Naive thymus-derived CD4-positive, alpha-beta T cell (primary cell): ENCODE measurements at regions of chr15 and their contacts with region 1.

Region 1: GRCh38 chr15:56786966-56787365 is 53.7 kb upstream of the ZNF280D start:
- DNase-seq: no peak
- ATAC-seq: no peak
- H3K4me3 ChIP-seq: no peak overlapping the region
- H3K4me3 Mint-ChIP-seq: peak overlapping the region in 1 of 10 donors; percentile 55
- H3K27ac ChIP-seq: no peak overlapping the region
- H3K27ac Mint-ChIP-seq: peak overlapping the region in 1 of 9 donors; percentile 76
- H3K4me1 ChIP-seq: no peaks in the 10 kb centered on the region
- H3K4me1 Mint-ChIP-seq: peaks cover 0 to 10% (median 0%) of the 10 kb centered on the region in 7 donors
- H3K27me3 ChIP-seq: no peaks in the 10 kb centered on the region
- H3K27me3 Mint-ChIP-seq: peaks cover 0 to 7% (median 0%) of the 10 kb centered on the region in 5 donors

Region 2: GRCh38 chr15:56582785-56583184 is 204.2 kb before region 1 on chr15:
- CTCF ChIA-PET with region 1: no interaction called
- POLR2A ChIA-PET with region 1: no interaction called
- intact Hi-C with region 1: no loop called
- DNase-seq: no peak
- ATAC-seq: no peak
- H3K4me3 ChIP-seq: no peak overlapping the region
- H3K4me3 Mint-ChIP-seq: no peak overlapping the region
- H3K27ac ChIP-seq: no peak overlapping the region
- H3K27ac Mint-ChIP-seq: no peak overlapping the region
- H3K4me1 ChIP-seq: no peaks in the 10 kb centered on the region
- H3K4me1 Mint-ChIP-seq: no peaks in the 10 kb centered on the region
- H3K27me3 ChIP-seq: no peaks in the 10 kb centered on the region
- H3K27me3 Mint-ChIP-seq: peaks cover 0 to 6% (median 0%) of the 10 kb centered on the region in 5 donors

Region 3: GRCh38 chr15:56765251-56765650 is 21.7 kb before region 1 on chr15:
- CTCF ChIA-PET with region 1: no interaction called
- POLR2A ChIA-PET with region 1: no interaction called
- intact Hi-C with region 1: loop called in 1 of 2 experiments (anchors 1 kb)
- DNase-seq: no peak
- ATAC-seq: no peak
- H3K4me3 ChIP-seq: no peak overlapping the region
- H3K4me3 Mint-ChIP-seq: peak overlapping the region in 1 of 10 donors; percentile 60
- H3K27ac ChIP-seq: no peak overlapping the region
- H3K27ac Mint-ChIP-seq: peak overlapping the region in 1 of 9 donors; percentile 80
- H3K4me1 ChIP-seq: no peaks in the 10 kb centered on the region
- H3K4me1 Mint-ChIP-seq: peaks cover 0 to 46% (median 6%) of the 10 kb centered on the region in 7 donors
- H3K27me3 ChIP-seq: no peaks in the 10 kb centered on the region
- H3K27me3 Mint-ChIP-seq: peaks cover 0 to 4% (median 0%) of the 10 kb centered on the region in 5 donors